Adrenal gland (tissue), 19 donors: ENCODE measurements at regions of chr2 and their contacts with region 1.

Region 1: GRCh38 chr2:172588931-172589330 is 33.0 kb downstream of the PDK1 start:
- DNase-seq: no peak
- H3K4me3 ChIP-seq: no peak overlapping the region
- H3K27ac ChIP-seq: no peak overlapping the region
- H3K4me1 ChIP-seq: peaks cover 0 to 6% of the 10 kb centered on the region in 2 donors
- H3K27me3 ChIP-seq: no peaks in the 10 kb centered on the region
- CTCF ChIP-seq: no peak
- POLR2A ChIP-seq: no peak

Region 2: DNA sequence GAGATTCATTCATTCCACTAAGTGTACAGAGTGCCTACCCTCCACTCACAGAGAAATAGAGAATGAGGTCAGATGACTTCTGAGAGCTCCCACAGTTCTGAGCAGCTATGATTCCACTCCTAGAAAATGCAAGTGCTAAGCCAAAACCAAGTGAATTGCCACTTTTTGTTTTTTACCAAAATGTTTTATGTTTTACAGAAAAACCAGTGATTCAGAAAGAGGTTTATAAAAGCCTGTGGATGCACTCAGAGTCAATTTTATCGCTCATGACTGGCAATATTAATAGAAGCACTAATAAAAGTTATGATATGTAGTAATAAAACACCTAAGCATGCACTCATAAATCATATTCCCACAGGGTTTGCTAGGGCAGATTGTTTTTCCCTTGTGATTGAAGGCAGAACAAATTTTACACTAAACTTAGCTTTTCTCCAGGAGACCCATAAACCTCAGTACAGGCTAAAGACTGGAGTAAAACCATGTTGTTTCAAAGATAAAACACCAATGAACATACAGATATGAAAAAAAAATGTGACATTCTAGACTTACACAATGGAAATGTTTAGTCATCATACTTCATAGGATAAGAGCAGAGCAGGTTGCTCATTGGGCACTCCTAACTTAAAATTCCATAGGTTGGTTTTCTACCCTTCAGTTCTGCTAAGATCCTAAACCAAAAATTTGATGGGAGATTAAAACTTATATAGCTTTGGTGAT is 34.5 kb after region 1 on chr2:
- intact Hi-C with region 1: no loop called
- DNase-seq: no peak
- H3K4me3 ChIP-seq: no peak overlapping the region
- H3K27ac ChIP-seq: no peak overlapping the region
- H3K4me1 ChIP-seq: no peaks in the 10 kb centered on the region
- H3K27me3 ChIP-seq: no peaks in the 10 kb centered on the region
- CTCF ChIP-seq: no peak
- POLR2A ChIP-seq: no peak

Region 3: GRCh38 chr2:172674034-172674967 is 85.4 kb after region 1 on chr2:
- intact Hi-C with region 1: loop called in 1 of 2 experiments (anchors 5 kb)
- DNase-seq: peak; percentile 37 to 62 (median 47)
- H3K4me3 ChIP-seq: no peak overlapping the region
- H3K27ac ChIP-seq: no peak overlapping the region
- H3K4me1 ChIP-seq: peaks cover 0 to 4% of the 10 kb centered on the region in 2 donors
- H3K27me3 ChIP-seq: no peaks in the 10 kb centered on the region
- CTCF ChIP-seq: peak; percentile 26 to 73 (median 52)
- POLR2A ChIP-seq: no peak

Region 4: GRCh38 chr2:172704072-172704936 is 115.4 kb after region 1 on chr2:
- intact Hi-C with region 1: no loop called
- DNase-seq: peak in 1 of 7 donors; percentile 10
- H3K4me3 ChIP-seq: no peak overlapping the region
- H3K27ac ChIP-seq: no peak overlapping the region
- H3K4me1 ChIP-seq: no peaks in the 10 kb centered on the region
- H3K27me3 ChIP-seq: peaks cover 18% of the 10 kb centered on the region
- CTCF ChIP-seq: peak; percentile 18 to 57 (median 38)
- POLR2A ChIP-seq: no peak

Region 5: GRCh38 chr2:172829229-172829628 is 240.3 kb after region 1 on chr2:
- intact Hi-C with region 1: no loop called
- DNase-seq: no peak
- H3K4me3 ChIP-seq: no peak overlapping the region
- H3K27ac ChIP-seq: peak overlapping the region in 1 of 5 donors; percentile 19
- H3K4me1 ChIP-seq: peaks cover 0 to 10% of the 10 kb centered on the region in 2 donors
- H3K27me3 ChIP-seq: no peaks in the 10 kb centered on the region
- CTCF ChIP-seq: no peak
- POLR2A ChIP-seq: no peak